Sigmoid colon (tissue), 7 donors: ENCODE measurements at regions of chr17 and their contacts with region 1.

Region 1: GRCh38 chr17:43170766-43171585 is at the start of gene NBR1:
- DNase-seq: peak; percentile 98
- H3K4me3 ChIP-seq: peak within 1 kb of the TSS; percentile 77 to 91 (median 80)
- H3K27ac ChIP-seq: peak within 1 kb of the TSS; percentile 95 to 98 (median 98)
- H3K4me1 ChIP-seq: peaks cover 0 to 57% (median 54%) of the 10 kb centered on the region in 4 donors
- H3K27me3 ChIP-seq: no peaks in the 10 kb centered on the region
- CTCF ChIP-seq: no peak
- EP300 ChIP-seq: no peak
- POLR2A ChIP-seq: peak; percentile 72 to 80
- total RNA-seq, gene NBR1: 77.5 to 98.1 (median 81.5) TPM

Region 2: DNA sequence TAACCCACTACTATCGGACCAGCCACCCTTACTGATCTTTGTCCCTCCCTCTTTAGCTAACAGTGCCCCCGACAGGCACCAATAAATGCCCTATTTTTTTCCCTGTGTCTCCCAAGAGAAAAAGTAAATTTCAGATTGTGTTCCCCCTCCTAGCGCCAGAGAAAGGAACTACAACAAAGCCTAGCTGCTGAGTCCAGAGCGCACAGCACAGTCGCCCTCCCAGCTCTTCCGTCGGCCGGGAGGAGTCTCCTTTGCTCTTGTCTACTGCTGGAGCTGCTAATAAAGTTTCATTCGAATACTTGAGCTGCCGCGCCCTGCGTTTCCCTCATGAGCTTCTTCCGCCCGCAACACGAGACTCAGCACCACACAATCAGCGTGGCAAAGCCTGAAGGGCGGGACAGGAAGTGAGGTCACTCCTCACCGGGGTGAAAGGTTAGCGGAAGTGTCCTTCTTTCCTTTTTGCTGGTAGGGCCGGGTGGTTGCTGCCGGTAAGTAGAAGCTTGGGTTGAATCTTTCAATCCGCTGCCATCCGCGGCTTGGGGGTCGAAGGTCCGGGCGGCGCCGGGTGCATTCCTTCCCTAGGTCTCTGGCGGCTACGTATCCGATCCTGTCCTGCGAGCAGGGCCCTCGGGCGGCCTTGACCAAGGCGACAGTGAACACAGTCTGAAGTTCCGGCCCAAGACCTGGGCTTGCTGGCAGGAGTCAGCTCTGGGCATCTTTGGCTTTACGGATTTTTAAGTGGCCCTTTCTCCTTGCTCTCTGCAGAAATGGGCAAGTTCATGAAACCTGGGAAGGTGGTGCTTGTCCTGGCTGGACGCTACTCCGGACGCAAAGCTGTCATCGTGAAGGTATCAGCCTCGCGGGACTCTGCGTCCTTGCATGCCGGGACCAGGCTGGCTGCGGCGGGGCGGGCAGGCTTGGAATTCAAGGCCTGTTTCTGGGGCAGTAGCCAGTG is 172.7 kb before region 1 on chr17 and contains the start of gene RPL27:
- intact Hi-C with region 1: loop called (anchors 2 kb)
- DNase-seq: peak; percentile 100
- H3K4me3 ChIP-seq: peak within 1 kb of the TSS; percentile 66 to 88 (median 79)
- H3K27ac ChIP-seq: peak within 1 kb of the TSS; percentile 93 to 97 (median 94)
- H3K4me1 ChIP-seq: peaks cover 0 to 22% (median 22%) of the 10 kb centered on the region in 4 donors
- H3K27me3 ChIP-seq: no peaks in the 10 kb centered on the region
- CTCF ChIP-seq: peak; percentile 80 to 98 (median 87)
- EP300 ChIP-seq: peak in 2 of 4 donors; percentile 42 to 85
- POLR2A ChIP-seq: peak; percentile 75 to 88
- total RNA-seq, gene RPL27: 1,576 to 2,828 (median 2,217) TPM

Region 3: GRCh38 chr17:43043307-43043706 is 127.7 kb before region 1 on chr17:
- intact Hi-C with region 1: no loop called
- DNase-seq: no peak
- H3K4me3 ChIP-seq: no peak overlapping the region
- H3K27ac ChIP-seq: no peak overlapping the region
- H3K4me1 ChIP-seq: no peaks in the 10 kb centered on the region
- H3K27me3 ChIP-seq: no peaks in the 10 kb centered on the region
- CTCF ChIP-seq: no peak
- EP300 ChIP-seq: no peak
- POLR2A ChIP-seq: no peak

Region 4: DNA sequence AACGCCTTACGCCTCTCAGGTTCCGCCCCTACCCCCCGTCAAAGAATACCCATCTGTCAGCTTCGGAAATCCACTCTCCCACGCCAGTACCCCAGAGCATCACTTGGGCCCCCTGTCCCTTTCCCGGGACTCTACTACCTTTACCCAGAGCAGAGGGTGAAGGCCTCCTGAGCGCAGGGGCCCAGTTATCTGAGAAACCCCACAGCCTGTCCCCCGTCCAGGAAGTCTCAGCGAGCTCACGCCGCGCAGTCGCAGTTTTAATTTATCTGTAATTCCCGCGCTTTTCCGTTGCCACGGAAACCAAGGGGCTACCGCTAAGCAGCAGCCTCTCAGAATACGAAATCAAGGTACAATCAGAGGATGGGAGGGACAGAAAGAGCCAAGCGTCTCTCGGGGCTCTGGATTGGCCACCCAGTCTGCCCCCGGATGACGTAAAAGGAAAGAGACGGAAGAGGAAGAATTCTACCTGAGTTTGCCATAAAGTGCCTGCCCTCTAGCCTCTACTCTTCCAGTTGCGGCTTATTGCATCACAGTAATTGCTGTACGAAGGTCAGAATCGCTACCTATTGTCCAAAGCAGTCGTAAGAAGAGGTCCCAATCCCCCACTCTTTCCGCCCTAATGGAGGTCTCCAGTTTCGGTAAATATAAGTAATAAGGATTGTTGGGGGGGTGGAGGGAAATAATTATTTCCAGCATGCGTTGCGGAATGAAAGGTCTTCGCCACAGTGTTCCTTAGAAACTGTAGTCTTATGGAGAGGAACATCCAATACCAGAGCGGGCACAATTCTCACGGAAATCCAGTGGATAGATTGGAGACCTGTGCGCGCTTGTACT is 45.6 kb before region 1 on chr17 and contains the start of gene BRCA1:
- intact Hi-C with region 1: loop called (anchors 2 kb)
- DNase-seq: peak; percentile 97
- H3K4me3 ChIP-seq: peak within 1 kb of the TSS; percentile 53 to 77 (median 68)
- H3K27ac ChIP-seq: peak within 1 kb of the TSS; percentile 80 to 87 (median 84)
- H3K4me1 ChIP-seq: peaks cover 0 to 24% (median 20%) of the 10 kb centered on the region in 4 donors
- H3K27me3 ChIP-seq: no peaks in the 10 kb centered on the region
- CTCF ChIP-seq: no peak
- EP300 ChIP-seq: no peak
- POLR2A ChIP-seq: peak; percentile 15 to 31
- total RNA-seq, gene BRCA1: 5.4 to 10.2 (median 6.1) TPM

Region 5: DNA sequence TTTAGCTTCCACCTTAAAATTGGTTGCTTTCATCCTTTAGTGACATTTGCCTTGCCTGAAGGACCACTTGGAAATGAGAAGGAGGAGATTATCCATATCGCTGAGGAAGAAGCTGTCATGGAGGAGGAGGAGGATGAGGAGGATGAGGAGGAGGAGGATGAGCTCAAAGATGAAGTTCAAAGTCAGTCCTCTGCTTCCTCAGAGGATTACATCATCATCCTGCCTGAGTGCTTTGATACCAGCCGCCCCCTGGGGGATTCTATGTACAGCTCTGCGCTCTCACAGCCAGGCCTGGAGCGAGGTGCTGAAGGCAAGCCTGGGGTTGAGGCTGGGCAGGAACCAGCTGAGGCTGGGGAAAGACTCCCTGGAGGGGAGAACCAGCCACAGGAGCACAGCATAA is 29.2 kb after region 1 on chr17:
- intact Hi-C with region 1: no loop called
- DNase-seq: no peak
- H3K4me3 ChIP-seq: no peak overlapping the region
- H3K27ac ChIP-seq: no peak overlapping the region
- H3K4me1 ChIP-seq: no peaks in the 10 kb centered on the region
- H3K27me3 ChIP-seq: no peaks in the 10 kb centered on the region
- CTCF ChIP-seq: no peak
- EP300 ChIP-seq: no peak
- POLR2A ChIP-seq: no peak

Region 6: GRCh38 chr17:43211480-43212402 is 40.8 kb after region 1 on chr17 and contains the start of gene TMEM106A:
- intact Hi-C with region 1: loop called (anchors 2 kb)
- DNase-seq: peak; percentile 93
- H3K4me3 ChIP-seq: peak within 1 kb of the TSS; percentile 51 to 71 (median 68)
- H3K27ac ChIP-seq: peak within 1 kb of the TSS; percentile 80 to 87 (median 84)
- H3K4me1 ChIP-seq: peaks cover 0 to 23% (median 20%) of the 10 kb centered on the region in 4 donors
- H3K27me3 ChIP-seq: no peaks in the 10 kb centered on the region
- CTCF ChIP-seq: peak; percentile 12 to 51 (median 40)
- EP300 ChIP-seq: no peak
- POLR2A ChIP-seq: peak in 1 of 2 donors; percentile 8
- total RNA-seq, gene TMEM106A: 3.0 to 7.2 (median 4.7) TPM

Region 7: GRCh38 chr17:43338886-43339516 is 168.0 kb after region 1 on chr17:
- intact Hi-C with region 1: loop called (anchors 5 kb)
- DNase-seq: peak; percentile 89
- H3K4me3 ChIP-seq: no peak overlapping the region
- H3K27ac ChIP-seq: peak overlapping the region in 2 of 4 donors; percentile 42 to 44
- H3K4me1 ChIP-seq: peaks cover 0 to 26% (median 17%) of the 10 kb centered on the region in 4 donors
- H3K27me3 ChIP-seq: no peaks in the 10 kb centered on the region
- CTCF ChIP-seq: peak in 3 of 4 experiments; percentile 56 to 81 (median 74)
- EP300 ChIP-seq: no peak
- POLR2A ChIP-seq: no peak